ENCODE measurements at regions of chr6 and their contacts with region 1.

Region 1: GRCh38 chr6:157323255-157323965 is at the start of gene TMEM242:
- DNase-seq: peak; percentile 56 to 93 (median 78)
- ATAC-seq: peak; percentile 94 to 97 (median 94)
- H3K4me3 ChIP-seq: peak within 1 kb of the TSS; percentile 65 to 89
- H3K4me3 Mint-ChIP-seq: peak within 1 kb of the TSS; percentile 93 to 96 (median 94)
- H3K27ac ChIP-seq: peak within 1 kb of the TSS; percentile 39
- H3K27ac Mint-ChIP-seq: peak within 1 kb of the TSS; percentile 86 to 95
- H3K4me1 ChIP-seq: peaks cover 9 to 11% of the 10 kb centered on the region in 2 experiments
- H3K4me1 Mint-ChIP-seq: peaks cover 18 to 30% (median 18%) of the 10 kb centered on the region in 3 donors
- H3K27me3 ChIP-seq: peaks cover 3 to 9% of the 10 kb centered on the region in 2 experiments
- H3K27me3 Mint-ChIP-seq: peaks cover 11 to 14% of the 10 kb centered on the region in 2 donors
- total RNA-seq, gene TMEM242: 10.3 to 17.9 (median 12.9) TPM

Region 2: DNA sequence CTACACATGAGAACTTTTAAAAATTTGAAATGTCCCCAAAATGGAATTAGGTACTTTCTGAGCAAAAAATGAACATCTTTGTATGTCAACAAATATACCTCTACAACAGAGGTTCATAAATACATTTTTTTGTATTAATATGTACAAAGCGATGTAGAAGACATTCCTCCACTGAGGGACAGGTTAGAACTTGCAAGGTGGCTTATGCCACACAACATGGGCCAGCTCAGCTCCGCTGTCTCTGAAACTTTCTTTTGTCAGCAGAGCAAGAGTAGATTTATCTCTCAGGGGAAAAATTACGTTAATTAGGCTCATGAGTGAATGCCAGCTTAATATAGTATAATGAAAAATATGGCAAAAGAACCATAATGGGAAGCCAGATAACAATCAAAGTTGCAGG is 10.5 kb after region 1 on chr6:
- CTCF ChIA-PET with region 1: no interaction called
- POLR2A ChIA-PET with region 1: interaction called in 1 of 2 experiments, 11 read pairs
- DNase-seq: no peak
- ATAC-seq: no peak
- H3K4me3 ChIP-seq: no peak overlapping the region
- H3K4me3 Mint-ChIP-seq: no peak overlapping the region
- H3K27ac ChIP-seq: no peak overlapping the region
- H3K27ac Mint-ChIP-seq: peak overlapping the region in 1 of 2 donors; percentile 5
- H3K4me1 ChIP-seq: no peaks in the 10 kb centered on the region
- H3K4me1 Mint-ChIP-seq: peaks cover 0 to 6% (median 0%) of the 10 kb centered on the region in 3 donors
- H3K27me3 ChIP-seq: peaks cover 2 to 26% of the 10 kb centered on the region in 2 experiments
- H3K27me3 Mint-ChIP-seq: peaks cover 26 to 45% of the 10 kb centered on the region in 2 donors

Measured in T-cell (primary cell).